GM18951 (cell line): ENCODE measurements at regions of chr7 and their contacts with region 1.

Region 1: GRCh38 chr7:137909037-137909436 is 62.3 kb upstream of the DGKI start:
- POLR2A ChIP-seq: no peak

Region 2: DNA sequence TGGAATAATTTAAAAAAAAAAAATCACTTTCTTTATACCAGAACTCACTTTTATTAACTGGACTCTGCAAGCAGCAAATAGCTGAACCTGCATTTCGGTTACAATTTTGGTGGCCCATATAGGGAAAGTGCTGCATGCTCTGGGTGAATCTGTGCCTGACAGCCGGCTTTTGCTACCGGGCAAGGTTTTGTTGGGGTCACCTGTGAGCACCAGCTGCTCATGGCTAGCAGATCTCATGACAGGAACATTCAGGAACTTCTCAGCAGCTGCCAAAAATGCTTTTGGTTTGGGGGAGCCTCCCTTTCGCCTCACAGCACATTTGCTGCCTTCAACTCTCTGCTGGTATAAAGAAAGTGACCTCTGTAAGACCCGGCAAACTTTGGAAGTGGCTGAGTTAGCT is 106.1 kb after region 1 on chr7:
- in situ Hi-C with region 1: loop called (anchors 5 kb)
- POLR2A ChIP-seq: no peak